Heart left ventricle (tissue), 16 donors: ENCODE measurements at regions of chr6 and their contacts with region 1.

Region 1: GRCh38 chr6:6736791-6737654 is 148.5 kb downstream of the LY86 start:
- DNase-seq: peak; percentile 77 to 91 (median 87)
- ATAC-seq: peak; percentile 79 to 91 (median 86)
- H3K4me3 ChIP-seq: peak overlapping the region; percentile 7 to 57 (median 42)
- H3K27ac ChIP-seq: peak overlapping the region; percentile 41 to 92 (median 82)
- H3K4me1 ChIP-seq: peaks cover 0 to 48% (median 5%) of the 10 kb centered on the region in 12 donors
- H3K27me3 ChIP-seq: no peaks in the 10 kb centered on the region
- CTCF ChIP-seq: no peak
- POLR2A ChIP-seq: no peak

Region 2: GRCh38 chr6:6826095-6826901 is 89.3 kb after region 1 on chr6:
- intact Hi-C with region 1: loop called in 2 of 10 experiments (anchors 5 to 10 kb)
- DNase-seq: peak; percentile 58 to 78 (median 63)
- ATAC-seq: peak; percentile 79 to 91 (median 87)
- H3K4me3 ChIP-seq: no peak overlapping the region
- H3K27ac ChIP-seq: peak overlapping the region; percentile 57 to 92 (median 75)
- H3K4me1 ChIP-seq: peaks cover 0 to 55% (median 13%) of the 10 kb centered on the region in 12 donors
- H3K27me3 ChIP-seq: no peaks in the 10 kb centered on the region
- CTCF ChIP-seq: no peak
- POLR2A ChIP-seq: no peak

Region 3: GRCh38 chr6:6856538-6857523 is 119.8 kb after region 1 on chr6:
- intact Hi-C with region 1: no loop called
- DNase-seq: peak; percentile 51 to 83 (median 79)
- ATAC-seq: peak; percentile 80 to 93 (median 86)
- H3K4me3 ChIP-seq: peak overlapping the region in 10 of 12 donors; percentile 4 to 40 (median 28)
- H3K27ac ChIP-seq: peak overlapping the region in 11 of 12 donors; percentile 21 to 86 (median 47)
- H3K4me1 ChIP-seq: peaks cover 0 to 38% (median 14%) of the 10 kb centered on the region in 12 donors
- H3K27me3 ChIP-seq: no peaks in the 10 kb centered on the region
- CTCF ChIP-seq: no peak
- POLR2A ChIP-seq: no peak

Region 4: DNA sequence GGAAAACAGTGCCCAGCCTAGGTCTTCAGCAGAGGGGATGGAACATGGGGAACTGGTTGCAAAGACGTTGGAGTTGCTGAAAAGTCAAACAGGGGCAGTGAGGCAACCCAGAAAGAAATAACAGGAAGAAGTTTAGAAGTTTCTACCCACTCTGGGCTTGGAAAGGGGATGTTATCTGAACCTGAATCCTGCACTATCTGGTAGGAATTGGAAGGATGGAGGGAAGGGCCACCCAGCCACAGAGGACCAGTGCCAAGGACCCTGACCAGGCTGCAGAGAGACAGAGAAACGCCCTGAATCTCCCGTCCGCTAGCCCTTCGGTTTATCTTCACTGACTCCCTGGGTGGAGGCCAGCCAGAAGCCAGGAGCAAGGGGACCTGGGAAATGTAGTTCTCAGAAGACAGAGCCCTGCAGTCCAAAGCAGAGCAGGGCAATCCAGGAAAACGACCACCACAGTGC is 153.4 kb after region 1 on chr6:
- intact Hi-C with region 1: loop called in 1 of 10 experiments (anchors 10 kb)
- DNase-seq: peak; percentile 38 to 76 (median 63)
- ATAC-seq: peak in 3 of 4 donors; percentile 46 to 56 (median 55)
- H3K4me3 ChIP-seq: peak overlapping the region in 1 of 12 donors; percentile 23
- H3K27ac ChIP-seq: peak overlapping the region in 9 of 12 donors; percentile 34 to 87 (median 74)
- H3K4me1 ChIP-seq: peaks cover 0 to 43% (median 19%) of the 10 kb centered on the region in 12 donors
- H3K27me3 ChIP-seq: no peaks in the 10 kb centered on the region
- CTCF ChIP-seq: no peak
- POLR2A ChIP-seq: no peak